CD4-positive, alpha-beta T cell (primary cell): ENCODE measurements at regions of chr2 and their contacts with region 1.

Region 1: DNA sequence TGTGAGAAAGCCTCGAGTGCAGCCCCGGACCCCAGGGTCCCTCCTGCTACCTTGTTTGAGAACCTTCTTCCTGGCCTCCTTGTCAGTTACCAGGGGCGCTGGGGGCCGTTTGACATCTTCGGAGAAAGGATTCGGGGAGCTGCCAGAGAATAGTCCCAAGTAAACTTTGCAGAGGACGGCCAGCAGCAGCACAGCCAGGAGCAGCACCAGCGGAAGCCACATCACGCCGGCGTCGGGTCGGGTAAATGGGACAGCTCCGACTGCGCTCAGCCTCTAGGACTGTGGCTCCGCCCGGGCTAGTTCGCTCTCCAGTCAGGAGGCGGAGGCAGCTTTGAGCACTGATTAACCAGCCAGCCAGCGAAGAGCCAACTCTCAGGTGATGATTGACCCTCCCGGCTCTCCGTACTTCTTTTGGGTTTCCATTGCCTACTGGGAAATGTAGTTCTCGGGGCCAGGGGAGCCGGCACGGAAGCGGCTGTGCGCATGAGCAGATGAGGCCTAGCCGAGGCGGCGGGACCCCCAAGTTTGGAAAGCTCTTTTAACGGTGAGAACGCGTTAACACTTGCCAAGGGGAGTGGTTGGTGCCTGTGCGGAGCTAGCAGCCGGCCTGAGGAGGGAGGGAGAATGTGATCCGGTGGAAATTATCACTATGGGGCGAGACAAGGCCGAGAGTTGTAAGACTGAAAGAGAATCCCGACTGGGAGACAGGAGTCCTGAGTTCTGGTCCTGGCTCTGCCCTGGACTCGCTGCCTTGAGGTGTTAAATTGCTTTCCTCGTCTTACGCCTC is at the starts of genes ELMOD3 and RETSAT:
- DNase-seq: peak; percentile 89 to 99 (median 94)
- ATAC-seq: peak; percentile 98
- H3K4me3 ChIP-seq: peak within 1 kb of the TSS; percentile 68
- H3K4me3 Mint-ChIP-seq: peak within 1 kb of the TSS; percentile 99
- H3K27ac ChIP-seq: peak within 1 kb of the TSS; percentile 75
- H3K27ac Mint-ChIP-seq: peak within 1 kb of the TSS; percentile 94
- H3K4me1 ChIP-seq: peaks cover 44% of the 10 kb centered on the region
- H3K4me1 Mint-ChIP-seq: peaks cover 63% of the 10 kb centered on the region
- H3K27me3 ChIP-seq: no peaks in the 10 kb centered on the region
- H3K27me3 Mint-ChIP-seq: no peaks in the 10 kb centered on the region
- CTCF ChIP-seq: no peak
- total RNA-seq, gene ELMOD3: 13.5 to 15.3 TPM
- total RNA-seq, gene RETSAT: 19.2 to 22.2 TPM

Region 2: DNA sequence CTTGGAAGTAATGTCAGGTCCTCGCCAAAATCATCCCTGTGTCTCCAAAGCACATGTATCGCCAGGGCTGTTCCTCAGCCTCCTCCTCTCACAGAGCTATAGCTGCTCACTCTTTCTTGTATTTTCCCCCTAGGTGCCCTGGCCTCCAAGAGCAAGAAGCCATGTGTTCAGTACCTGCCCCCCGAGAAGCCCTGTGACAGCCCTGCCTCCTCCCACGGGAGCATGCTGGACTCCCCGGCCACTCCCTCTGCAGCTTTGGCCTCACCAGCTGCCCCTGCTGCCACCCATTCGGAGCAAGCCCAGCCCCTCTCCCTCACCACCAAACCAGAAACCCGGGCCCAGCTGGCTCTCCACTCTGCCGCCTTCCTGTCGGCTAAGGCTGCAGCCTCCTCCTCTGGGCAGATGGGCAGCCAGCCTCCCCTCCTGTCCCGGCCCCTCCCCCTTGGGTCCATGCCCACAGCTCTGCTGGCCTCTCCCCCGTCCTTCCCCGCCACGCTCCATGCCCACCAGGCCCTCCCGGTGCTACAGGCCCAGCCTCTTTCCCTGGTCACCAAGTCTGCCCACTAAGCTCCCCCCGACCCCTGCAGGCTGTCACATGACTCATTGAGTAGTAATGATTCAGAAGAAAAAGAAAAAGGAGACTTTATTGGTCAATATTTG is 45.5 kb before region 1 on chr2:
- CTCF ChIA-PET with region 1: no interaction called
- POLR2A ChIA-PET with region 1: interaction called, 20 read pairs
- intact Hi-C with region 1: no loop called
- DNase-seq: peak in 2 of 14 experiments; percentile 23 to 34
- ATAC-seq: peak; percentile 6
- H3K4me3 ChIP-seq: peak overlapping the region; percentile 41
- H3K4me3 Mint-ChIP-seq: peak overlapping the region; percentile 76
- H3K27ac ChIP-seq: peak overlapping the region; percentile 42 to 52
- H3K27ac Mint-ChIP-seq: peak overlapping the region; percentile 88
- H3K4me1 ChIP-seq: peaks cover 45% of the 10 kb centered on the region
- H3K4me1 Mint-ChIP-seq: peaks cover 36% of the 10 kb centered on the region
- H3K27me3 ChIP-seq: no peaks in the 10 kb centered on the region
- H3K27me3 Mint-ChIP-seq: no peaks in the 10 kb centered on the region
- CTCF ChIP-seq: no peak

Region 3: GRCh38 chr2:85340034-85340892 is 14.2 kb before region 1 on chr2:
- CTCF ChIA-PET with region 1: no interaction called
- POLR2A ChIA-PET with region 1: interaction called, 15 read pairs
- intact Hi-C with region 1: no loop called
- DNase-seq: no peak
- ATAC-seq: no peak
- H3K4me3 ChIP-seq: no peak overlapping the region
- H3K4me3 Mint-ChIP-seq: no peak overlapping the region
- H3K27ac ChIP-seq: no peak overlapping the region
- H3K27ac Mint-ChIP-seq: no peak overlapping the region
- H3K4me1 ChIP-seq: no peaks in the 10 kb centered on the region
- H3K4me1 Mint-ChIP-seq: no peaks in the 10 kb centered on the region
- H3K27me3 ChIP-seq: no peaks in the 10 kb centered on the region
- H3K27me3 Mint-ChIP-seq: no peaks in the 10 kb centered on the region
- CTCF ChIP-seq: no peak

Region 4: GRCh38 chr2:85409845-85410583 is 55.5 kb after region 1 on chr2 and contains the start of gene CAPG:
- CTCF ChIA-PET with region 1: no interaction called
- POLR2A ChIA-PET with region 1: interaction called, 9 read pairs
- intact Hi-C with region 1: loop called (anchors 5 to 10 kb)
- DNase-seq: peak in 11 of 14 experiments; percentile 17 to 68 (median 44)
- ATAC-seq: peak; percentile 13
- H3K4me3 ChIP-seq: peak within 1 kb of the TSS; percentile 56
- H3K4me3 Mint-ChIP-seq: peak within 1 kb of the TSS; percentile 81
- H3K27ac ChIP-seq: peak within 1 kb of the TSS; percentile 31 to 34
- H3K27ac Mint-ChIP-seq: peak within 1 kb of the TSS; percentile 77
- H3K4me1 ChIP-seq: peaks cover 69% of the 10 kb centered on the region
- H3K4me1 Mint-ChIP-seq: peaks cover 67% of the 10 kb centered on the region
- H3K27me3 ChIP-seq: peaks cover 0 to 5% of the 10 kb centered on the region in 2 experiments
- H3K27me3 Mint-ChIP-seq: peaks cover 2% of the 10 kb centered on the region
- CTCF ChIP-seq: no peak
- total RNA-seq, gene CAPG: 21.7 to 23.3 TPM

Region 5: DNA sequence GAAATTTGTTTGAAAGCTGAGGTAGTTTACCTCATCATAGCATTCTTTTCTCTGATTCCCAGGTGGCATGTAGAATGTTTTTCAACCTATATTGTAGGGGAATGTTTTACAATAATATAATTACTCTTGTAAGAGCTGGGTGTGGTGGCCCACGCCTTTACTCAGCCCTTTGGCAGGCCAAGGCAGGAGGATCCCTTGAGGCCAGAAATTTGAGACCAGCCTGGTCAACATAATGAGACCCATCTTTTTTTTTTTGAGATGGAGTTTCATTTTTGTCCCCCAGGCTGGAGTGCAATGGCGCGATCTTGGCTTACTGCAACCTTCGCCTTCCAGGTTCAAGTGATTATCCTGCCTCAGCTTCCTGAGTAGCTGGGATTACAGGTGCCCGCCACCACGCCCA is 265.1 kb after region 1 on chr2:
- CTCF ChIA-PET with region 1: no interaction called
- POLR2A ChIA-PET with region 1: interaction called, 4 read pairs
- intact Hi-C with region 1: loop called in 1 of 2 experiments (anchors 5 kb)
- DNase-seq: no peak
- ATAC-seq: no peak
- H3K4me3 ChIP-seq: no peak overlapping the region
- H3K4me3 Mint-ChIP-seq: peak overlapping the region; percentile 36
- H3K27ac ChIP-seq: no peak overlapping the region
- H3K27ac Mint-ChIP-seq: peak overlapping the region; percentile 9
- H3K4me1 ChIP-seq: peaks cover 28% of the 10 kb centered on the region
- H3K4me1 Mint-ChIP-seq: peaks cover 30% of the 10 kb centered on the region
- H3K27me3 ChIP-seq: no peaks in the 10 kb centered on the region
- H3K27me3 Mint-ChIP-seq: no peaks in the 10 kb centered on the region
- CTCF ChIP-seq: no peak

Region 6: DNA sequence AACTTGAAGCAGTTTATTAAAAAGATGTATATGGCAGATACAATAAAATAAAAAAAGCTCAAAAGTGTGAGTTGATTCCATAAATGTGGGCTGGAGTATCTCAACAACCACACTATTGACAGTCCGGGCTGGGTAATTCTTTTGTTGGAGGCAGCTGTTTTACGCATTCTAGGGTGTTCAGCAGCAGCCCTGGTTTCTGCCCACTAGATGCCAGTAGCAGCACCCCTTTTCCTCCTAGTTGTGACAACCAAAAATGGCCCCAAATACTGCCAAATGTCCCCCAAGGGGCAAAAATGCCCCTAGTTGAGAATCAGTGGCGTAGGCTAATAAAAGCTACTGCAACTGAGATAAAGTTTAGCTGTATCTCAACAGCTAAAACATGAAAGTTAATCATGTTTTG is 1164.0 kb after region 1 on chr2:
- CTCF ChIA-PET with region 1: no interaction called
- POLR2A ChIA-PET with region 1: no interaction called
- intact Hi-C with region 1: no loop called
- DNase-seq: peak; percentile 14 to 70 (median 32)
- ATAC-seq: peak; percentile 66
- H3K4me3 ChIP-seq: no peak overlapping the region
- H3K4me3 Mint-ChIP-seq: no peak overlapping the region
- H3K27ac ChIP-seq: no peak overlapping the region
- H3K27ac Mint-ChIP-seq: no peak overlapping the region
- H3K4me1 ChIP-seq: no peaks in the 10 kb centered on the region
- H3K4me1 Mint-ChIP-seq: peaks cover 16% of the 10 kb centered on the region
- H3K27me3 ChIP-seq: no peaks in the 10 kb centered on the region
- H3K27me3 Mint-ChIP-seq: no peaks in the 10 kb centered on the region
- CTCF ChIP-seq: peak; percentile 70